ENCODE measurements at regions of chr6 and their contacts with region 1.

Region 1: GRCh38 chr6:104682722-104683643 is 176.7 kb downstream of the HACE1 start:
- DNase-seq: peak in 4 of 10 donors; percentile 13 to 53 (median 33)
- H3K4me3 ChIP-seq: no peak overlapping the region
- H3K27ac ChIP-seq: no peak overlapping the region
- H3K27me3 ChIP-seq: no peaks in the 10 kb centered on the region
- CTCF ChIP-seq: peak; percentile 22 to 79 (median 65)

Region 2: DNA sequence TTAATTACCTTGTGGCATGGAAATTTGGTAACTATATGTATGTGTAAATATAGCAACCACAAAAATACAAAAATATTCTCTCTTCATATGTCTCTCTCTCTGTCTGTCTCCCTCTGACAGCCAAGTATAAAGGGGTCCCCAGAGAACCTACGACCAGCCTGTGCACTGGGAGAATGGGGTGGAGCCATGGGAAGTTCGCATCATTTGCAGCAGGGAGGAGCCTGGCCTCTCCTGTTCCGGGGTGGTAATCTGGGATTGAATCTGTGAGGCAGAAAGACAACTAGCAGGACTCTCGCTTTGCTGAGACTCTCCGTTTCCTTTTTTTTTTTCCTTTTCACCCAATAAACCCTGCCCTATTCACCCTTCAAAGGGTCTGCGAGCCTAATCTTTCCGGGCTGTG is 932.4 kb before region 1 on chr6:
- intact Hi-C with region 1: no loop called
- DNase-seq: no peak
- H3K4me3 ChIP-seq: no peak overlapping the region
- H3K27ac ChIP-seq: no peak overlapping the region
- H3K27me3 ChIP-seq: no peaks in the 10 kb centered on the region
- CTCF ChIP-seq: no peak

Region 3: DNA sequence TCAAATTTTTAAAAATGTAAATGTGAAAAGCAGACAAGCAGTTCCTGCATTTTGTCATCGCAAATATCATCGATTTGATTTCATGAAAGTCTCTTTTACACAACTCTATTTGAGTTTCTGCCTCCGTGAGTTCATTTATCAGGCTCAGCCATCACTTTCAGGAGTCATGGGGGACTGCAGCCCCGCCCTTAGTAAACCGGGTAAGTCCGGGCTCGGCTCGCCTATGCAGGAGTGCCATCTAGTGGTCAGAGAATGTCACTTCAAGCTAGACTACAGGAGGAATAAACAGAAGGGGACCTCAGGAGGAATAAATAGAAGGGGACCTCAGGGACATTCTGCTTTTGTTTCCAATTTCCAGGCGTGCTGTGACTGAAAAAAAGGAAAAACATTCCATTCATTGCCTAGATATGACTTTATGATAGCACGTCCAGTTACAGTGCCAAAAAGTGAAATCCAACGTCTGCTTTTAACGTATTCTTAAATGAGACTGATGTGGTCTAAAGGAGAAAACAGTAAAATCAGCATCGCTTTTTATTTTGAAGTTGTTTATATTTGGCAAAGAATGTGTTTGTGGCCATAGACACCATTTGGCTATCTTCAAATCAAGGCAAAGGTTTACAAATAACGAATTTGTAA is 157.2 kb before region 1 on chr6:
- intact Hi-C with region 1: loop called in 1 of 2 experiments (anchors 10 kb)
- DNase-seq: peak; percentile 57 to 85 (median 80)
- H3K4me3 ChIP-seq: peak overlapping the region; percentile 14 to 68 (median 44)
- H3K27ac ChIP-seq: peak overlapping the region in 56 of 59 donors; percentile 8 to 88 (median 69)
- H3K27me3 ChIP-seq: no peaks in the 10 kb centered on the region
- CTCF ChIP-seq: peak; percentile 86 to 99 (median 94)

Region 4: GRCh38 chr6:104771258-104771832 is 88.4 kb after region 1 on chr6:
- intact Hi-C with region 1: loop called in 1 of 2 experiments (anchors 5 kb)
- DNase-seq: no peak
- H3K4me3 ChIP-seq: no peak overlapping the region
- H3K27ac ChIP-seq: no peak overlapping the region
- H3K27me3 ChIP-seq: no peaks in the 10 kb centered on the region
- CTCF ChIP-seq: peak; percentile 52 to 84 (median 68)

Measured in dorsolateral prefrontal cortex (tissue), 120 donors.